Calu3 (cell line): ENCODE measurements at regions of chr18 and their contacts with region 1.

Region 1: GRCh38 chr18:59402432-59403090 is 43.5 kb upstream of the LMAN1 start:
- DNase-seq: peak; percentile 89
- H3K4me3 Mint-ChIP-seq: no peak overlapping the region
- H3K27ac Mint-ChIP-seq: no peak overlapping the region
- H3K4me1 Mint-ChIP-seq: no peaks in the 10 kb centered on the region
- H3K27me3 Mint-ChIP-seq: no peaks in the 10 kb centered on the region
- CTCF ChIP-seq: peak; percentile 98

Region 2: GRCh38 chr18:59085797-59086196 is 316.8 kb before region 1 on chr18:
- CTCF ChIA-PET with region 1: interaction called, 12 read pairs
- intact Hi-C with region 1: loop called (anchors 2 kb)
- DNase-seq: no peak
- H3K4me3 Mint-ChIP-seq: no peak overlapping the region
- H3K27ac Mint-ChIP-seq: no peak overlapping the region
- H3K4me1 Mint-ChIP-seq: peaks cover 11% of the 10 kb centered on the region
- H3K27me3 Mint-ChIP-seq: peaks cover 74% of the 10 kb centered on the region
- CTCF ChIP-seq: no peak

Region 3: GRCh38 chr18:59249205-59249774 is 153.3 kb before region 1 on chr18:
- CTCF ChIA-PET with region 1: interaction called, 71 read pairs
- intact Hi-C with region 1: loop called (anchors 2 kb)
- DNase-seq: peak; percentile 70
- H3K4me3 Mint-ChIP-seq: no peak overlapping the region
- H3K27ac Mint-ChIP-seq: no peak overlapping the region
- H3K4me1 Mint-ChIP-seq: peaks cover 17% of the 10 kb centered on the region
- H3K27me3 Mint-ChIP-seq: peaks cover 94% of the 10 kb centered on the region
- CTCF ChIP-seq: peak; percentile 74

Region 4: DNA sequence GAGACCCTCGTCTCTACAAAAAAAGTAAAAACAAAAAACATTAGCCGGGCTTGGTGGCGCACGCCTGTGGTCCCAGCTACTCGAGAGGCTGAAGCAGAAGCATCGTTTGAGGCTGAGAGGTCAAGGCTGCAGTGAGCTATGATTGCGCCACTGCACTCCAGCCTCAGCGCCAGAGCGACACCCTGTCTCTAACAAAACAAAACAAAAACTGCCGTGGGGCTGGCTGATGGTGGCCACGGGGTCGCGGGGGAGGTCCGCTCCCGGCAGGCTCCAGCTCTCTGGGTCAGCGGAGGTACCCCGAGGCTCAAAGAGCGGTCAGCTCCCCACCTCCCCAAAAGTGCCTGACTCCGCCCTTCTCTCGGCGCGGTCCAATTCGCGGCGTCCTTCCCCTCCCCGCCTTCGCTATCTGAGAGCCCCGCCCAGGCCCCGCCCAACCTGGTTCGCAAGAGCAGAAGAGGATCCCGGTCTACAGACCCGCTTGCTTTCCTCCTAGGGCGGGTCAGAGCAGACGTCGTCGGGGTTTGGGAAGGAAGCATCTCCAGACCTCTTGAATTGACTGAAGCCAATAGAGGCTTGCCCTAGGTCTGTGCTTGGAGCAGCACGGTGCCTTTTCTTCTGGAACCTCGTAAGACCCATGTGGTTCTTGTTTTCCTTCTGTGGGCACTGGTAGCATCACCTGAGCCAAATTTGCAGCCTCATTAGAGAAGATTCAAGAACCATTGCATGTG is 137.2 kb before region 1 on chr18:
- CTCF ChIA-PET with region 1: interaction called, 13 read pairs
- intact Hi-C with region 1: no loop called
- DNase-seq: peak; percentile 36
- H3K4me3 Mint-ChIP-seq: peak overlapping the region; percentile 49
- H3K27ac Mint-ChIP-seq: no peak overlapping the region
- H3K4me1 Mint-ChIP-seq: peaks cover 36% of the 10 kb centered on the region
- H3K27me3 Mint-ChIP-seq: peaks cover 91% of the 10 kb centered on the region
- CTCF ChIP-seq: no peak

Region 5: DNA sequence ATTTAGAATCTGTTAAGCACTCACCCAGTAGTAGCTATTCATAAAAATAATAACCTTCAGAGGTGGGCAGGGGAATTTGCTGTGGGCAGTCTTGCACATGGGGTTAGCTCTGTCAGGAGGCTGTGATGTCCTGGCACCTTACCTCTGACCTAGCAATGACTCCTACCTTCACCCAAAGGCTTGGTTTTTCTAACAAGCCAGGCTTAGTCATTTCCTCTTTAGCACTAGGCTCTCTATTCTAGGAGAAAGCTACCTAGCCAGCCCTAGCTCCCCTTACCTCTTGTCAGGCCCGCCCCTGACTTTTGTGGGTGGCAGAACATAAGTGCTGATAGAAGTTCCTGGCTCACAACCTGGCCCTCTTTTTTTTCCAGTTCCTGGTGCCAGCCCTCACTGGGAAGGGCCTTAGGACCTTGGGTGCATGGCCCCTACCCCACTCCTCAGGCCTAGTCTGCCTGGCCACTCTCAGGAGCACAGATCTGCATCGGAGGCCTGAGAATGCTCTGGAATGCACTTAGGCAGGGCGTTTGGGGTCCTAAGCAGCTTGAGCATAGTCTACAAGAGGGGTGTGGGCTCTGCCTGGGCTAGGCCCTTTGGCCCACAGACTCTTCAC is 101.8 kb before region 1 on chr18:
- CTCF ChIA-PET with region 1: interaction called, 10 read pairs
- intact Hi-C with region 1: no loop called
- DNase-seq: peak; percentile 7
- H3K4me3 Mint-ChIP-seq: no peak overlapping the region
- H3K27ac Mint-ChIP-seq: no peak overlapping the region
- H3K4me1 Mint-ChIP-seq: peaks cover 20% of the 10 kb centered on the region
- H3K27me3 Mint-ChIP-seq: peaks cover 19% of the 10 kb centered on the region
- CTCF ChIP-seq: no peak

Region 6: DNA sequence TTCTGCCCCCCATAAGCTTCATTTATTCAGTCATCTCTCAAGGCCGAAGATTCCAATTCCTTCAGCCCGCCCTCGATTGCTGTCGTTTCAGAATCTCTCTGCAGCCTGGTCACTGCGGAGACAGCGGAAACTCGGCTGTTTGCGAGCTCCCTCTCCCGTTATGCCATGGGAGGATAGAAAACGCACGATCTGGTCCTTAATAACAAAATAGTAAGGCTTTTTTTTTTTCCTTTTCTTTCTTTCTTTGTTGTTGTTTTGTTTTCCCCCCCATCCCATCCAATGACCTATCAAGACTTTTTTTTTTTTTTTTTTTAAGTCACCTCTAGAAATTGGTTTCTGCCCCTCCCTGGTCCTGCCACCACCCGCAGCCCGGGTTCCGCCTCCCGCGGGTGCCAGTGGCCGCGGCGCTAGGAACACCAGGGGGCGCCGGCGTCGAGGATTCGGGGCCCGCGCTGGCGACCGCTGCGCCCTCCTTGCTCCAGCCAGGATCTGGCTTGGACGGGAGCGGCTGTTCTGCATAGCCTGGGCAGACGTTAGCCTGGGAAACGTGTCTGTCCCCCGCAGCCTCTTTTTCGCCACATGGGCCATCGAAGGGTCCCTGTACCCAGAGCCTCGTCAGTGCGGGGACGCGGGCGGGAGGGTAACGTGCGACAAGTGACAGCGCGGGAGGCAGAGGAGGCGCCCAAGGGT is 94.2 kb before region 1 on chr18:
- CTCF ChIA-PET with region 1: interaction called, 117 read pairs
- intact Hi-C with region 1: loop called (anchors 2 kb)
- DNase-seq: peak; percentile 92
- H3K4me3 Mint-ChIP-seq: peak overlapping the region; percentile 42
- H3K27ac Mint-ChIP-seq: no peak overlapping the region
- H3K4me1 Mint-ChIP-seq: no peaks in the 10 kb centered on the region
- H3K27me3 Mint-ChIP-seq: peaks cover 57% of the 10 kb centered on the region
- CTCF ChIP-seq: peak; percentile 92

Region 7: GRCh38 chr18:59358712-59359575 is 43.6 kb before region 1 on chr18 and contains the start of gene LMAN1:
- CTCF ChIA-PET with region 1: interaction called, 12 read pairs
- intact Hi-C with region 1: no loop called
- DNase-seq: peak; percentile 99
- H3K4me3 Mint-ChIP-seq: peak within 1 kb of the TSS; percentile 89
- H3K27ac Mint-ChIP-seq: peak within 1 kb of the TSS; percentile 97
- H3K4me1 Mint-ChIP-seq: peaks cover 13% of the 10 kb centered on the region
- H3K27me3 Mint-ChIP-seq: peaks cover 13% of the 10 kb centered on the region
- CTCF ChIP-seq: no peak
- total RNA-seq, gene LMAN1: 159 and 174 TPM in 2 replicates